ENCODE measurements at regions of chr15 and their contacts with region 1.

Region 1: GRCh38 chr15:38683382-38684242 is 119.0 kb upstream of the RASGRP1 start:
- DNase-seq: peak in 3 of 5 donors; percentile 35 to 48 (median 40)
- ATAC-seq: peak in 3 of 4 donors; percentile 74 to 81 (median 79)
- H3K4me3 ChIP-seq: no peak overlapping the region
- H3K27ac ChIP-seq: peak overlapping the region in 1 of 12 donors; percentile 57
- H3K4me1 ChIP-seq: peaks cover 0 to 45% (median 0%) of the 10 kb centered on the region in 12 donors
- H3K27me3 ChIP-seq: peaks cover 0 to 3% (median 0%) of the 10 kb centered on the region in 9 donors
- CTCF ChIP-seq: peak; percentile 66 to 78 (median 71)
- POLR2A ChIP-seq: no peak

Region 2: DNA sequence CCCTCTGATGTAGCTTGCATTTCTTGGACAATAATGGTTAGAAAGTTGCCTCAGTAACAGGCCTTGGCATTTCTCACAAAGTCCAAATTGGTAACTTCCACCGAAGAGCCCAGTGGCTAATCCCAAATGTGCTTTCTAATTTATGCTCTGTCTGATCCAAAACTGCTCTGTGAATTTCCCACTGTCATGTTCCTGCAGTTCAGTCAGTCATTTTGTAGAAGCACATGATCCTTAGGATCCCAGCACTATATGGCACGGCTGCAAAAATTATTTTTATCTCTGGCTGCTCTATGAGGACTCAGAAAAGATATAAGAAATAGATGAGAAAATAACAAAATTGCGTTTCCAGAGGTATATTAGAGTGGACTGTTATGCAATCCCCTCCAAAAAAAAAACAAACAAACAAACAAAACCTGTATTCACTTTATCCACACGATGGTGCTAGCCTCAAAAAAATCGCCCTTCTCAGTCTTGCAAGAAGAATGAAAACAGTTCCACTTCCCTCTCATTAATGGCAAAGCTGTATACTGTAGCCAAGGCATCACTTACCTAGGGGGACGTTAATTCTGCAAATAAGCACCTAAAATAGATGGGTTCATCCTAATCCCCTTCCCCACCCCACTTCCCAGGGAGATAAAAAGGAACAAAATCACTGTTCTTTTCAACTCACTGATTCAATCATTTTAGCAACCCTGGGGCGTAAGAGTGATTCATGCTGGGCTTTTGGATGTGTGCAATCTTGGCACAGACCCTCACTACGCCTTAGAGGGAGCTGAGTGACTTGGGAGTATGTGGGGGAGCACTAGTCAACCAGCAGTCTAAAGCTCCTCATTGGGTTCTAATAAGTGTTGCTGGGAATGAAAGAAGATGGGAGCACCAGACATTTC is 687.9 kb before region 1 on chr15:
- intact Hi-C with region 1: loop called in 5 of 10 experiments (anchors 5 to 10 kb)
- DNase-seq: peak in 1 of 5 donors; percentile 25
- ATAC-seq: peak; percentile 69 to 85 (median 77)
- H3K4me3 ChIP-seq: no peak overlapping the region
- H3K27ac ChIP-seq: no peak overlapping the region
- H3K4me1 ChIP-seq: peaks cover 0 to 11% (median 0%) of the 10 kb centered on the region in 12 donors
- H3K27me3 ChIP-seq: no peaks in the 10 kb centered on the region
- CTCF ChIP-seq: peak; percentile 51 to 78 (median 66)
- POLR2A ChIP-seq: no peak

Region 3: DNA sequence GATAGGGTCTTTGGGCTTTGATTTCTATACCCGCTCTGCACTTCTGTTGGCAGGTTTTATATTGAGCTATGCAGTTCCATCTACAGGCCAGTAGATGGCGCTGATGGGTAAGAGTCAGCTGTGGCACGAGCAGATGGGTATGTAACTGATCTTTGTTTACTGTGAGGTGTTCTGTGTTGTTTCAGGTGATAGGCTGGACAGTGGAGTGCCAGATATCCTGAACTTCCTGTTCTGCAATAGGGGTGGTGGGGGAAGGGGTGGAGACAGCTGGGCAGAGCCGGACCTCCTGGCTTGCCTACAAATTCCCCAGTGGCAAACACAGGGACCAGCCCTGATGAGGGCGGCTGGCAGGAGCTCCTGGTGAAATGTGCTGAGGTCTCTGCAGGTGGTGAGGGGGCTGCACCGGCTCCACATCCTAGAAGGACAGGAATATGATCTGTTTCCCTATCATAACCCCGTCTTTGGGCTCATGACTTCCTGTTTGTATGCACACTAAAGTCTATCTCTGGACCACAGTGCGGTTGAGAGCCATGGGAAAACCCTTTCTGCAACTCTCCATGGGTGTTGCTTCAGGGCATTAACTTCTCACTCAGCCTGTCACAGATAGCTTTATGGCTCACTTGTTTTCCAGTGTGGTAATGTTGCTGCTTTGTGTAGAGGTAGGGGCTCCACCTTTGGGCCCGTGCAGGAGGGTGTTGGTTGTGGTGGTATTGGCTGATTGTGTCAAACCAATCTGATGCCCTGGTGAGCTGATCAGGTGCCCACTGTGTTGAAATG is 243.1 kb before region 1 on chr15:
- intact Hi-C with region 1: loop called in 9 of 10 experiments (anchors 2 to 10 kb)
- DNase-seq: peak in 4 of 5 donors; percentile 16 to 30 (median 28)
- ATAC-seq: peak; percentile 55 to 82 (median 80)
- H3K4me3 ChIP-seq: no peak overlapping the region
- H3K27ac ChIP-seq: no peak overlapping the region
- H3K4me1 ChIP-seq: peaks cover 0 to 8% (median 0%) of the 10 kb centered on the region in 12 donors
- H3K27me3 ChIP-seq: peaks cover 0 to 8% (median 0%) of the 10 kb centered on the region in 9 donors
- CTCF ChIP-seq: peak; percentile 80 to 95 (median 92)
- POLR2A ChIP-seq: no peak

Region 4: GRCh38 chr15:38474155-38474757 is 209.4 kb before region 1 on chr15:
- intact Hi-C with region 1: loop called in 9 of 10 experiments (anchors 5 to 10 kb)
- DNase-seq: no peak
- ATAC-seq: peak; percentile 61 to 96 (median 88)
- H3K4me3 ChIP-seq: no peak overlapping the region
- H3K27ac ChIP-seq: no peak overlapping the region
- H3K4me1 ChIP-seq: peaks cover 0 to 4% (median 0%) of the 10 kb centered on the region in 12 donors
- H3K27me3 ChIP-seq: no peaks in the 10 kb centered on the region
- CTCF ChIP-seq: peak; percentile 30 to 70 (median 60)
- POLR2A ChIP-seq: no peak

Region 5: GRCh38 chr15:38479266-38479665 is 204.3 kb before region 1 on chr15:
- intact Hi-C with region 1: loop called (anchors 5 to 10 kb)
- DNase-seq: no peak
- ATAC-seq: no peak
- H3K4me3 ChIP-seq: no peak overlapping the region
- H3K27ac ChIP-seq: no peak overlapping the region
- H3K4me1 ChIP-seq: peaks cover 0 to 9% (median 0%) of the 10 kb centered on the region in 12 donors
- H3K27me3 ChIP-seq: no peaks in the 10 kb centered on the region
- CTCF ChIP-seq: no peak
- POLR2A ChIP-seq: no peak

Region 6: GRCh38 chr15:38624244-38625205 is 59.1 kb before region 1 on chr15:
- intact Hi-C with region 1: loop called in 1 of 10 experiments (anchors 10 kb)
- DNase-seq: no peak
- ATAC-seq: peak in 2 of 4 donors; percentile 23 to 61
- H3K4me3 ChIP-seq: no peak overlapping the region
- H3K27ac ChIP-seq: peak overlapping the region in 3 of 12 donors; percentile 9 to 50 (median 32)
- H3K4me1 ChIP-seq: peaks cover 0 to 27% (median 10%) of the 10 kb centered on the region in 12 donors
- H3K27me3 ChIP-seq: no peaks in the 10 kb centered on the region
- CTCF ChIP-seq: no peak
- POLR2A ChIP-seq: no peak